ENCODE measurements at regions of chr22 and their contacts with region 1.

Region 1: DNA sequence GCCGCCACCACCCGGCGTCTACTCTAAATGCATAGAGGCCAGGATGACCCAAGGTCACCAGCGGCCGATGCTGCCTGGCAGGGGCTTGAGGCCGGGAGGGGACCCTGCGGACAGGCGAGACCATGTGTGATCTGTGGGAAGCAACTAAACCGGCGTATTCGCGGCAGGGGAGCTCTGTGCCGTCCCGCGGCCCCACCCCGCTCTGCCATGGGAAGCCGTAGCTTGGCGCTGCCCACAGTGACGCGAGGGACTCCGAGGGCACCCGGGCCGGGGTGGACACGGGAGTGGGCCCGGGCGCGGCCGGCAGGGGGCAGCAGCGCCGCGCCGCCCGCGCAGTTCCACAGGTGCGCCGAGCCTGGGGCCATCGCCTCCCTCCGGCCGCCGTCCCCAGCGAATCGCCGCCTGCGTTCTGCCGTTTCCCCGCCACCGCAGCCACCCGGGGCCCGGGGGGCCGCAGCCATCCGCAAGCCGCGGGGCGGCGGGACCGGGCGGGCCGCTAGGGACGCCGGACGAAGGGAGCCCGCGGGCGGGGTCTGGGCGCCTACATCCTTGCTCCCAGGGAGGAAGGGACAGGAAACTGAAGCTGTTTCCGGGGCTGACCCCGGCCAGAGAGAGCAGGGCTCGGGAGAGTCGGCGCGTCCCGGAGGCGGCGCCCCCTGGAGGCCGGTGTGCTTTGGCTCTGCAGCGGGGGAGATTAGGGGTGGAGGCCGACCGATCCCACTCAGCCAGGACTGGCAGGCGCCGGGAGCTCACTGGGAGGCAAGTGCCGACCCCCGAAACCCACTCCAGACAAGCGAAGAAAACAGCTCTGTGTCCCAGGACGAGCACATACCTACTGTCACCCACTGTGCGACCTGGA is 12.5 kb upstream of the HDHD5 start:
- DNase-seq: peak; percentile 90 to 95
- H3K4me3 ChIP-seq: peak overlapping the region; percentile 60 to 87 (median 67)
- H3K27ac ChIP-seq: peak overlapping the region; percentile 93 to 99 (median 96)
- H3K4me1 ChIP-seq: peaks cover 6 to 18% (median 10%) of the 10 kb centered on the region in 4 donors
- H3K27me3 ChIP-seq: no peaks in the 10 kb centered on the region
- CTCF ChIP-seq: peak in 5 of 7 experiments; percentile 75 to 92 (median 77)
- EP300 ChIP-seq: no peak
- POLR2A ChIP-seq: no peak

Region 2: DNA sequence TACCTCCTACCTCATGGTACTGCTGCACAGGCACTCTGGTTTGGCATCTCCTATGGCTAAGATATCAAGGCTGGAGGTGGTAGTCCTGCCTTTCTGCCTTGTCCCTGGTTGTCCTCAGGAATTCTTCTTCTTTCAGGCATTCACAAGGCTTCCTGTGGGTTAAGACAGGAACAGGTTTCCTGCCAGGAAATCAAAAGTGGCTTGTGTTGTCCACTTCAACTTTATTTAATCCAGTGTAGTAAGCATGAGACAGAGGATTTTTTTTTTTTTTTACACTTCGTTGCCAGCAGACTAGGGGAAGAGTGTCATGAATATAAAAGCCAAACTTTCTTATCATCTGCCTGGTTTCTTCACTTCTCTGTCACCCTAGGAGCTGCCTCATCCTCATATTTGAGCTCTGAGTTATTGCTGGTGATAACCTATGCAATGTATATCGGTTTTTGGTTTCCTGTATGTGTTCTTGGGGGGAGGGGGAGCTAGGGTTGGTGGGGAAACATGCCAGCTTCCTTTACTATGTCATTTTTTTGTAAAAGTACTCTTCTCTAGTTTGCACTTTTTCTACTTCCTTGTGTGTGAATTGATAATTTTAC is 396.5 kb before region 1 on chr22:
- intact Hi-C with region 1: no loop called
- DNase-seq: no peak
- H3K4me3 ChIP-seq: no peak overlapping the region
- H3K27ac ChIP-seq: no peak overlapping the region
- H3K4me1 ChIP-seq: no peaks in the 10 kb centered on the region
- H3K27me3 ChIP-seq: no peaks in the 10 kb centered on the region
- CTCF ChIP-seq: no peak
- EP300 ChIP-seq: no peak
- POLR2A ChIP-seq: no peak

Region 3: DNA sequence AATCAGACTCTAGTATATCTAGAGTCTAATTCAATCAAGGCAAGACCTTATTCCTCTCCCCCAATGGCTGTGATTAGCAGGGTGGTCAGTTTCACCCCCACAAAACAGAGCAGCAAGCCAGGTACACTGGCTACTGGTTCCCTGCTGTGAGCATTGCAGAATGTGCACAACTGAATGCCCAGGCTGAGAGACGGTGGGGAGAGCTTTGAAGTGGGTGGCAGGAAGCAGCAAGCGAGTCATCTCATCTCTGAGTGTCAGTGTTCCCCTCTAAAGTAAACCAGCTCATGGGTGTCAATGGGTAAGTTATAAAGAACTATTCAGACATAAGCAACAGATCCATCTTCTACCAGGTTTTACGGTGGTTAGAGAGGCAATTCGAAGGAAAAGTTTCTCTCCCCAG is 201.1 kb before region 1 on chr22:
- intact Hi-C with region 1: no loop called
- DNase-seq: no peak
- H3K4me3 ChIP-seq: no peak overlapping the region
- H3K27ac ChIP-seq: no peak overlapping the region
- H3K4me1 ChIP-seq: no peaks in the 10 kb centered on the region
- H3K27me3 ChIP-seq: peaks cover 0 to 31% (median 7%) of the 10 kb centered on the region in 3 donors
- CTCF ChIP-seq: no peak
- EP300 ChIP-seq: no peak
- POLR2A ChIP-seq: no peak

Region 4: GRCh38 chr22:17084554-17085276 is 86.8 kb before region 1 on chr22 and contains the start of gene IL17RA:
- intact Hi-C with region 1: loop called (anchors 10 kb)
- DNase-seq: peak; percentile 94 to 96
- H3K4me3 ChIP-seq: peak within 1 kb of the TSS; percentile 73 to 96 (median 88)
- H3K27ac ChIP-seq: peak within 1 kb of the TSS; percentile 91 to 96 (median 95)
- H3K4me1 ChIP-seq: peaks cover 13 to 49% (median 39%) of the 10 kb centered on the region in 4 donors
- H3K27me3 ChIP-seq: no peaks in the 10 kb centered on the region
- CTCF ChIP-seq: no peak
- EP300 ChIP-seq: no peak
- POLR2A ChIP-seq: peak in 1 of 4 donors; percentile 58
- total RNA-seq, gene IL17RA: 6.2 to 19.1 (median 14.7) TPM

Region 5: GRCh38 chr22:17112486-17113042 is 59.0 kb before region 1 on chr22:
- intact Hi-C with region 1: no loop called
- DNase-seq: no peak
- H3K4me3 ChIP-seq: no peak overlapping the region
- H3K27ac ChIP-seq: no peak overlapping the region
- H3K4me1 ChIP-seq: peaks cover 0 to 26% (median 0%) of the 10 kb centered on the region in 4 donors
- H3K27me3 ChIP-seq: no peaks in the 10 kb centered on the region
- CTCF ChIP-seq: no peak
- EP300 ChIP-seq: no peak
- POLR2A ChIP-seq: no peak

Region 6: DNA sequence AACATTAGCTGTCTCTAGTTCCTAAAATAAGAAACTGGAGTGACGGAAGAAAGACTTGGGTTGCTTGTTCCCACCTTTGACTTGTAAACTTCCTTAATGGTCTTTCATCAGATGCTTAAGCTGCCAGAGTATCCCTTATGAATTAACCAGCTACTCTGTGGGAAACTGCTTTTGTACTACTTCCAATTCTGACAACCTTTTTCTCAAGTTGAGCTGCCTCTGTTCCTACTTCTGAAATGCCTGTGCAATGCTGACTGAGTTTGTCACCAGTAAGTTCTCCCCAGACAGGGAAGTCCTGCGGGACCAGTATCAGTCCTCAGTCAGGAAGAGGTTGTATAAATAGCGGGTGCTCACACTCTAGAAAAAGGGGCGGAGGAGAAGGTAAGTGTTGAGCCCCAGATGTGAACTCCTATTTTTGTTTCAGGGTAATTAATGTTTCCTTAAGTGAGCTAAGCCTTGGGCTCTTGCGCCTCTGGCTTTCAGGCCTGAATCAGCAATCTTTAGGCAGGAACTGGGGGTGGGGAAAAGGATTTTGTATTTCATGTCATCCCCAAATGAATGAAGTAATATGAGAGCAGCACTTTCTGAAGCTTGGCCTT is 264.9 kb after region 1 on chr22:
- intact Hi-C with region 1: no loop called
- DNase-seq: peak in 1 of 2 donors; percentile 58
- H3K4me3 ChIP-seq: no peak overlapping the region
- H3K27ac ChIP-seq: no peak overlapping the region
- H3K4me1 ChIP-seq: peaks cover 0 to 7% (median 3%) of the 10 kb centered on the region in 4 donors
- H3K27me3 ChIP-seq: peaks cover 0 to 15% (median 0%) of the 10 kb centered on the region in 3 donors
- CTCF ChIP-seq: no peak
- EP300 ChIP-seq: no peak
- POLR2A ChIP-seq: no peak

Region 7: DNA sequence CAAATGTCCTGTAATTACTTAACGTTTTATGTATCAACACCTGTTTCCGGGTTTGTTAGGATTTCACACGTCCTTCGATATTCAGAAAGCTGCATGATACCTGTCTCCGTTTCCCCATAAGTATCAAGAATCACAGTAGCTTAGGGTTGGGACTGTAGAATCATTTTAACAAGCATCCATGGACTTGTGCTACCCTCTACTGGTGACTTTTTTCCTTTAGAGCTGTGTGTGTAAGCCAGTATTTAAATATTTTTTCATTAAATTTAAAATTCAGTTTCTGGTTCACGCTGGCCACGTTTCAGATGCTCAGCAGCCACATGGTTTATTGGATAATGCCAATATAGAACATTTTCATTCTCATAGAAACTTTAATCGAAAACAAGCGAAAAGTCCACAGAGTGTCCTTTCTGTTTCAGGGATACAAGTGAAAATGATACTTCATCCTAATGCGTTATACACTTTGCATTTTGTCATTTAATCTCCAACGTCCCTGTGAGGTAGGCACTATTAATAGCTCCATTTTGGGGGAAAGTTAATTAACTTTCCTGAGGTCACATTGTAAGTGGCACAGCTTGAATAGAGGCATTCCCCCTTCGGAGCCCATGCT is 330.2 kb after region 1 on chr22:
- intact Hi-C with region 1: loop called (anchors 10 kb)
- DNase-seq: peak in 1 of 2 donors; percentile 88
- H3K4me3 ChIP-seq: no peak overlapping the region
- H3K27ac ChIP-seq: no peak overlapping the region
- H3K4me1 ChIP-seq: no peaks in the 10 kb centered on the region
- H3K27me3 ChIP-seq: peaks cover 0 to 6% (median 0%) of the 10 kb centered on the region in 3 donors
- CTCF ChIP-seq: peak in 5 of 7 experiments; percentile 12 to 58 (median 44)
- EP300 ChIP-seq: no peak
- POLR2A ChIP-seq: no peak

Measured in stomach (tissue), 19 donors.